Motor neuron (in vitro differentiated cells): ENCODE measurements at regions of chr18 and their contacts with region 1.

Region 1: GRCh38 chr18:5106730-5107129 is 90.3 kb downstream of the AKAIN1 start:
- ATAC-seq: no peak
- H3K4me3 ChIP-seq: no peak overlapping the region
- H3K27ac ChIP-seq: no peak overlapping the region
- H3K4me1 ChIP-seq: no peaks in the 10 kb centered on the region

Region 2: DNA sequence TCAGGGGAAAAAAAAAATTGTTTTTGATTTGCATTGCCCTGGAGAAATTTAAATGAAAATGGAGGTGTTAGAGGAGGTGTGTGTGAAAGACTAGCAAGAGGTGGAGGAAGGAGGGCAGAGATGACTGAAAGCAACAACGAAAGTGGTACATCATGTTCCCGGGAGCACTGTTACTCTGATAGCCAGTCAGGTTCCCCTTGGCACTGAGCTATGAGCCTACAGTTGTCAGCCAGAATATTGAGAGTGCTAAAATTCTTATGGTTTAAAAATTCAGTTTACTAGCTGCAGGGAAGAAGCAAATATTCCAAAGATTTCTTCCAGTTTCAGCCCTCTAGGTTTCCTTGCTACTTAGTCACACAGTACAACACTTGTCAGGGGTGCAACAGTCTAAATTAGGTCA is 284.9 kb before region 1 on chr18:
- in situ Hi-C with region 1: no loop called
- ATAC-seq: no peak
- H3K4me3 ChIP-seq: no peak overlapping the region
- H3K27ac ChIP-seq: no peak overlapping the region
- H3K4me1 ChIP-seq: no peaks in the 10 kb centered on the region

Region 3: GRCh38 chr18:5214583-5215351 is 108.0 kb after region 1 on chr18:
- in situ Hi-C with region 1: loop called in 1 of 9 experiments (anchors 25 kb)
- ATAC-seq: no peak
- H3K4me3 ChIP-seq: no peak overlapping the region
- H3K27ac ChIP-seq: no peak overlapping the region
- H3K4me1 ChIP-seq: no peaks in the 10 kb centered on the region

Region 4: GRCh38 chr18:5295981-5296705 is 189.4 kb after region 1 on chr18:
- in situ Hi-C with region 1: no loop called
- ATAC-seq: peak; percentile 55 to 78 (median 74)
- H3K4me3 ChIP-seq: peak overlapping the region; percentile 51 to 83 (median 63)
- H3K27ac ChIP-seq: peak overlapping the region; percentile 93 to 94
- H3K4me1 ChIP-seq: peaks cover 6 to 13% of the 10 kb centered on the region in 2 donors

Region 5: DNA sequence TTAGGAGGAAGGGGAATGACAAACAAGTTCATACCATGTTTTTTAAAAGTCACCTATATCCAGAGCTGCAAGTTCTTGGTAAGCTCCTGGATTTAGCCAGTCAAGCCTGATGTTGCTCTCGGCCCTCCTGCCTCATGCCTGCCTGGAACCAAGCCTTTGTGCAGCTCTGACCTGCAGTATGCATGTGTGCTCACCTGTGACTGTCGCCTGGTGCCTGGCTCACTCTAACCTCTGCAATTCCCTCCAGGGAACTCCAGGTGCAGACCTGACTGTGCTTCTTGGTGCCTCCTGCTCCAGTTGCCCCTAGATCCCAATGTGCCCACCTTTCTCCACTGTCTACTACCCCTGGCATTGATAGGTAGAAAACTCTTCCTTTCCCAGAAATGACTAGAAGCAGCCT is 273.9 kb after region 1 on chr18:
- in situ Hi-C with region 1: no loop called
- ATAC-seq: no peak
- H3K4me3 ChIP-seq: no peak overlapping the region
- H3K27ac ChIP-seq: no peak overlapping the region
- H3K4me1 ChIP-seq: no peaks in the 10 kb centered on the region

Region 6: DNA sequence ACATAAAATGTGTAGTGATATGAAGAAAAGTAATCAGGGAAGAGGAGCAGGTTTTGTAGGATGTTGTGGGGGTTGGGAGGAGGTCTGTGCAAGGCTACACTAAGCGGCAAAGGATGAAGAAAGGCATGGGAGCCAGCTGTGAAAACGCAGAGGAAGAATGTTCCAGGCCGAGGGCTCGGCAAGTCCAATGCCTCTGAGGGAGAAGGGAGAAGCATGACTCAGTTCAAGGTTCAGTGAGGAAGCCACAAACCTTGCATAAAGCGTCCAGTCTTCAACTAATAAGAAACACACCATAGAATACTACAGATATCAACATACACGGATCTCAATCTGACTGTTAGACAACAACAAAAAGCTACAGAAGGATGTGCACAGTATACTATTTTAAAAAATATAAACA is 420.9 kb after region 1 on chr18:
- in situ Hi-C with region 1: no loop called
- ATAC-seq: peak in 2 of 8 experiments; percentile 44 to 76
- H3K4me3 ChIP-seq: no peak overlapping the region
- H3K27ac ChIP-seq: no peak overlapping the region
- H3K4me1 ChIP-seq: peaks cover 4 to 10% of the 10 kb centered on the region in 2 donors